ENCODE measurements at regions of chr3 and their contacts with region 1.

Region 1: GRCh38 chr3:149812606-149813366 is at the start of gene RNF13:
- DNase-seq: peak; percentile 80 to 94 (median 92)
- ATAC-seq: peak; percentile 96
- H3K4me3 ChIP-seq: peak within 1 kb of the TSS; percentile 95
- H3K4me3 Mint-ChIP-seq: peak within 1 kb of the TSS; percentile 96 to 100 (median 99)
- H3K27ac ChIP-seq: peak within 1 kb of the TSS; percentile 94
- H3K27ac Mint-ChIP-seq: peak within 1 kb of the TSS; percentile 97 to 100 (median 99)
- H3K4me1 ChIP-seq: peaks cover 16 to 34% of the 10 kb centered on the region in 2 donors
- H3K4me1 Mint-ChIP-seq: peaks cover 39 to 54% (median 47%) of the 10 kb centered on the region in 7 donors
- H3K27me3 ChIP-seq: no peaks in the 10 kb centered on the region
- H3K27me3 Mint-ChIP-seq: peaks cover 0 to 14% (median 4%) of the 10 kb centered on the region in 5 donors
- total RNA-seq, gene RNF13: 41.2 to 68.5 (median 66.1) TPM

Region 2: GRCh38 chr3:149086232-149086988 is 726.4 kb before region 1 on chr3 and contains the start of gene HLTF:
- CTCF ChIA-PET with region 1: no interaction called
- POLR2A ChIA-PET with region 1: no interaction called
- intact Hi-C with region 1: loop called (anchors 2 to 5 kb)
- DNase-seq: peak; percentile 75 to 93 (median 90)
- ATAC-seq: peak; percentile 99
- H3K4me3 ChIP-seq: peak within 1 kb of the TSS; percentile 97
- H3K4me3 Mint-ChIP-seq: peak within 1 kb of the TSS; percentile 84 to 100 (median 97)
- H3K27ac ChIP-seq: peak within 1 kb of the TSS; percentile 64
- H3K27ac Mint-ChIP-seq: peak within 1 kb of the TSS; percentile 54 to 95 (median 86)
- H3K4me1 ChIP-seq: peaks cover 4 to 18% of the 10 kb centered on the region in 2 donors
- H3K4me1 Mint-ChIP-seq: peaks cover 15 to 28% (median 22%) of the 10 kb centered on the region in 7 donors
- H3K27me3 ChIP-seq: no peaks in the 10 kb centered on the region
- H3K27me3 Mint-ChIP-seq: no peaks in the 10 kb centered on the region
- total RNA-seq, gene HLTF: 9.1 to 26.5 (median 17.3) TPM

Region 3: GRCh38 chr3:149273096-149273751 is 539.6 kb before region 1 on chr3:
- CTCF ChIA-PET with region 1: no interaction called
- POLR2A ChIA-PET with region 1: no interaction called
- intact Hi-C with region 1: loop called in 1 of 2 experiments (anchors 10 kb)
- DNase-seq: peak in 7 of 9 donors; percentile 19 to 67 (median 52)
- ATAC-seq: peak; percentile 92
- H3K4me3 ChIP-seq: no peak overlapping the region
- H3K4me3 Mint-ChIP-seq: no peak overlapping the region
- H3K27ac ChIP-seq: no peak overlapping the region
- H3K27ac Mint-ChIP-seq: no peak overlapping the region
- H3K4me1 ChIP-seq: peaks cover 4 to 13% of the 10 kb centered on the region in 2 donors
- H3K4me1 Mint-ChIP-seq: peaks cover 6 to 14% (median 13%) of the 10 kb centered on the region in 7 donors
- H3K27me3 ChIP-seq: no peaks in the 10 kb centered on the region
- H3K27me3 Mint-ChIP-seq: peaks cover 0 to 15% (median 0%) of the 10 kb centered on the region in 5 donors

Region 4: GRCh38 chr3:149657926-149658733 is 154.7 kb before region 1 on chr3 and contains the start of gene WWTR1:
- CTCF ChIA-PET with region 1: no interaction called
- POLR2A ChIA-PET with region 1: no interaction called
- intact Hi-C with region 1: loop called in 1 of 2 experiments (anchors 1 kb)
- DNase-seq: peak in 1 of 9 donors; percentile 55
- ATAC-seq: peak; percentile 54
- H3K4me3 ChIP-seq: peak within 1 kb of the TSS; percentile 47
- H3K4me3 Mint-ChIP-seq: peak within 1 kb of the TSS; percentile 63 to 87 (median 80)
- H3K27ac ChIP-seq: no peak within 1 kb of the TSS
- H3K27ac Mint-ChIP-seq: peak within 1 kb of the TSS in 2 of 9 donors; percentile 12 to 14
- H3K4me1 ChIP-seq: peaks cover 0 to 4% of the 10 kb centered on the region in 2 donors
- H3K4me1 Mint-ChIP-seq: peaks cover 0 to 21% (median 10%) of the 10 kb centered on the region in 7 donors
- H3K27me3 ChIP-seq: no peaks in the 10 kb centered on the region
- H3K27me3 Mint-ChIP-seq: peaks cover 60 to 81% (median 69%) of the 10 kb centered on the region in 5 donors
- total RNA-seq, gene WWTR1: 0.19 to 0.56 (median 0.34) TPM

Region 5: DNA sequence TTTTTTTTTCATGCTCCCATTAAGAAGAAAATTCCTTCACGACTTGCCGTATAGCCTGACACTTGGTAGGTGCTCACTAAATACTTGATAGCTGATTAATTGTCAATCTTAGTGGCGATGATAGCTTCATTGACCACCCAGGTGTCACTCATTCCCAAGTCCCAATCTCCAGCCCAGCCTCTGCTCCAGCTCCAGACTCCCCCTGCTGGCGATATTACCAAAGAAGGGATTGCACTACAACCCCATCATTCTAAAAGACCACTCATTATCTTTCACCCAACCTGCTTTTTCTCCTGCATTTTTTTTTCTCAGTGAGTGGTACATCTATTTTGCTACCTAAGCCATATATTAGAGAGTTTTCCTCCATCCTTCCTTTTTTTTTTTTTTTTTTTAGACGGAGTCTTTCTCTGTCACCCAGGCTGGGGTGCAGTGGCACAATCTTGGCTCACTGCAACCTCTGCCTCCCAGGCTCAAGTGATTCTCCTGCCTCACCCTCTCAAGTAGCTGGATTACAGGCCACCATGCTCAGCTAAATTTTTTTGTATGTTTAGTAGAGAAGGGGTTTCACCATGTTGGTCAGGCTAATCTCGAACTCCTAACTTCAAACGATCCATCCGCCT is 41.0 kb before region 1 on chr3:
- CTCF ChIA-PET with region 1: interaction called, 4 read pairs
- POLR2A ChIA-PET with region 1: no interaction called
- intact Hi-C with region 1: loop called (anchors 5 kb)
- DNase-seq: peak in 5 of 9 donors; percentile 1 to 30 (median 13)
- ATAC-seq: no peak
- H3K4me3 ChIP-seq: no peak overlapping the region
- H3K4me3 Mint-ChIP-seq: no peak overlapping the region
- H3K27ac ChIP-seq: no peak overlapping the region
- H3K27ac Mint-ChIP-seq: no peak overlapping the region
- H3K4me1 ChIP-seq: no peaks in the 10 kb centered on the region
- H3K4me1 Mint-ChIP-seq: no peaks in the 10 kb centered on the region
- H3K27me3 ChIP-seq: no peaks in the 10 kb centered on the region
- H3K27me3 Mint-ChIP-seq: peaks cover 6 to 17% (median 11%) of the 10 kb centered on the region in 5 donors

Region 6: DNA sequence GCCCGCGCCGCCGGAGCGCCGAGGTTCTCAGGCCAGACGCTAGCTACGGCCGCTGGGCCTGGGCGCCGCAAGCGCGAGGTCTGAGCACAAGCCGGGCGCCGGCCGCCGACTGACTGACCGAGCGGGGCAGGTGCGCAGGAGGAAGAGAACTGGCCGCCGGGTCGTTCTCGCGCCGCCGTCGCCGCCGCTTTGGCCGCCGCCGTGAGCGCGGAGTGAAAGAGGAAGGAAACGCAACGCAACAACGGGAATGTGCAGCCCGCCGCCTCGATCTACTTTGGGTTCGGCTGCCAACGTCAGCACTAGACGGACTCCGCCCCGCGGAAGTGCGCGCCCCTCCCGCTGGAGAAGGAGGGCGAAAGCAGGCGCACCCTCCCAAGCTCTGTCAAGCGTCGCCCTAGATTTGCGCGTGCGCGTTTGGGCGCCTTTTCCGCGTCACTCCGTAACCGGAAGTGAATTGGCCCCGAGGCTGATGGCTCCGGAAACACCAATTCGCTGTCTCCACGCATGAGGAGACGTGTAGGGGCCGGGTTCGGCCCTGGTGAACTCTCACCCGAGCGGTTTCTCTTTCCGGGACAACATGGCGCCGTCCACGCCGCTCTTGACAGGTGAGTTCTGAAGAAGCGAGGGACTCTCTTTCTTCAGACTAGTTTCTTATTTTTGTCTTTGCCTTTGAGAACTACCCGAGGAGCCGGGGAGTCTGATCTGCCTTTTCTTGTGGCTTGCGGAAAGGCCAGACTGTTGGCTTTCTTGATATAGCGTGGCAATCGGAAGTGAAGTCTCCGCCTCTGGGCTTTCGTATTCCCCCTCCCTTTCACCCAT is 733.6 kb after region 1 on chr3 and contains the starts of genes EIF2A and SERP1:
- CTCF ChIA-PET with region 1: no interaction called
- POLR2A ChIA-PET with region 1: no interaction called
- intact Hi-C with region 1: loop called in 1 of 2 experiments (anchors 1 kb)
- DNase-seq: peak; percentile 97 to 100 (median 100)
- ATAC-seq: peak; percentile 94
- H3K4me3 ChIP-seq: peak within 1 kb of the TSS; percentile 78
- H3K4me3 Mint-ChIP-seq: peak within 1 kb of the TSS; percentile 88 to 99 (median 96)
- H3K27ac ChIP-seq: peak within 1 kb of the TSS; percentile 96
- H3K27ac Mint-ChIP-seq: peak within 1 kb of the TSS; percentile 93 to 100 (median 98)
- H3K4me1 ChIP-seq: peaks cover 15 to 23% of the 10 kb centered on the region in 2 donors
- H3K4me1 Mint-ChIP-seq: peaks cover 34 to 84% (median 79%) of the 10 kb centered on the region in 7 donors
- H3K27me3 ChIP-seq: no peaks in the 10 kb centered on the region
- H3K27me3 Mint-ChIP-seq: no peaks in the 10 kb centered on the region
- total RNA-seq, gene EIF2A: 94.7 to 135 (median 105) TPM
- total RNA-seq, gene SERP1: 89.4 to 120 (median 115) TPM